PC-3 (cell line): ENCODE measurements at regions of chr7 and their contacts with region 1.

Region 1: GRCh38 chr7:73851410-73852234 is 9.3 kb upstream of the METTL27 start:
- DNase-seq: peak; percentile 98
- ATAC-seq: peak; percentile 72
- H3K4me3 ChIP-seq: peak overlapping the region; percentile 27; the same call in 1 of the 2 replicates
- H3K27ac ChIP-seq: peak overlapping the region; percentile 97
- H3K4me1 ChIP-seq: peaks cover 51% of the 10 kb centered on the region
- H3K27me3 ChIP-seq: no peaks in the 10 kb centered on the region
- CTCF ChIP-seq: no peak

Region 2: DNA sequence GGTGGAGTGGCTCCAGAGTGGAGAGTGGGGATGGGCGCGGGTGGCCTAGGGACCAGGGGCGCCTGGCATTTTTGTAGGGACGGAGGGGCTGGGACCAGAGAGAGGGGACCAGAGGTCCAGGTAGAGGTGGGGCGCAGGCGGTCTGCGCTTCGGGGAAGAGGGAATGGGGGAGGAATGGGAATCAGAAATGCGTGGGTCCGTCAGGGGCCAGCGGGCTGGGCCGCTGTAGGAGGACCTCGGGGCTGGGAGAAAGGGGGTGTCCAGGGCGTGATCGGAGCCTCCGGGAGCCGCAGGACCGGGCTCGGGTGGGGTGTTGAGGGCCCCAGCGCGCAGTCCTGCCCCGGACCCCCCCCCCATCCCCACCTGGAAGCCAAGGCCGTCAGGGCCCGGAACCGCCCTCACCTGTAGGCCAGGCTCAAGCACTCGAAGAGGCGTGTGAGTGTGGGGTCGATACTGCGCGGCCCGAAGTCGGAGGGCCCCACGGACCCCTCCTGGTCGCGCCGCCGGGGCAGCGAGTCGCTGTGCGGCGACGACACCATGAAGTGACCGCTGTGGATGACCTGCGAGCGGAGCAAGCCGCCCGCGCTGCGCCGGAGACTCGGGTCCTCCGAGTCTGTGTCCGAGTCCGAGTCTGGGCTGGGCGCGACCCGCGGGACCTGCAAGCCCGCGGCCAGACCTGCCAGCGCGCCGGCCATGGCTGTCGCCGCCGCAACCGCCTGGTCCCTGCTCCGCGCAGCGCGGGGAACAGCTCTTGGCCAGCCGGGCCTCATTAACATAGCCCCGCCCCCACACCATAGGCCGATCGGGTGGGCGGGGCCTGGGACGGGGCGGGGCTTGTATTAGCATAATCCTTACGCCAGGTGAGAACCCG is 227.6 kb before region 1 on chr7 and contains the start of gene MLXIPL:
- CTCF ChIA-PET with region 1: no interaction called
- POLR2A ChIA-PET with region 1: no interaction called
- intact Hi-C with region 1: loop called (anchors 10 kb)
- DNase-seq: peak; percentile 86
- ATAC-seq: peak; percentile 93
- H3K4me3 ChIP-seq: peak within 1 kb of the TSS; percentile 74
- H3K27ac ChIP-seq: no peak within 1 kb of the TSS
- H3K4me1 ChIP-seq: peaks cover 5% of the 10 kb centered on the region; the same call in 1 of the 2 replicates
- H3K27me3 ChIP-seq: peaks cover 13% of the 10 kb centered on the region
- CTCF ChIP-seq: no peak
- total RNA-seq, gene MLXIPL: 4.7 and 6.9 TPM in 2 replicates

Region 3: DNA sequence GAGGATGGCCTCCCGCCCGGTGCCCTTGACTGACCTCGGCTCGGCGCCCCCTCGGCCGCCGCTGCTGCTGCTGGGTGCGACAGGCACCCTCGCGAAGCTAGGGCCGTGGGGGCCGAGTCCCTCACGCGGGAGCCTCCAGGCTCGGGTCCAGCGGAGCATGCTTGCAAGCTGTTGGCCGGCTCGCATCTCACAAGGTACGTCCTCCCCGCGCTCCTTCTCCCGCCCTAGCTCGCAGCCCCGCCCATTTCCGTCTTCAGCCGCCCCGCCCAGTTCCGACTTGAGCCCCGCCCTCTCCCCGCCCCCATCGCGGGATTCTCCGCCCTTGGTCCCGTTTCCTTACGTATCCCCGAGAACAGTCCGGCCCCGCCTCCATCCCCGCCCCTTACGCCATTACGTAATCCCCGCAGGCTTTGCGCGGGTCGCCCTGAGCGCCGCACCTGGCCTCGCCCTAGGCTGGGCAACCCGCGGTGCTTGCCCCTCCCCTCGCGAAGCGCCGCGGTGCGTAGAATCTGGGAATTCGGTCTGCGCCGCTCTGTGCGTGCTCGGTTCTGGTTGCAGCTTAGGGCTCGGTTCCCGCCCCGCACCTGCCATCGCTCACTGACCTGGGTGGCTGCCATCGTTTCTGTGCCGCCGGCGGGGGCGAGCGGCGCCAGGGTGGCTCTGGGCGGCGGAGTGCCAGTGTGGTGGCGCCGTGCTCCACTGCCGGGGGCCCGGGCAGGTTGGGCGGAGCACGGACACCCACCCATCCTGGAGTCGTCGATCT is 112.8 kb before region 1 on chr7 and contains the start of gene ABHD11:
- CTCF ChIA-PET with region 1: no interaction called
- POLR2A ChIA-PET with region 1: interaction called, 5 read pairs
- intact Hi-C with region 1: loop called (anchors 1 kb)
- DNase-seq: peak; percentile 95
- ATAC-seq: peak; percentile 76
- H3K4me3 ChIP-seq: peak within 1 kb of the TSS; percentile 92
- H3K27ac ChIP-seq: peak within 1 kb of the TSS; percentile 73
- H3K4me1 ChIP-seq: peaks cover 36% of the 10 kb centered on the region
- H3K27me3 ChIP-seq: no peaks in the 10 kb centered on the region
- CTCF ChIP-seq: 0 out of 2 replicates have a peak, but pooled peaks have one; percentile 14
- total RNA-seq, gene ABHD11: 38.6 and 41.4 TPM in 2 replicates

Region 4: DNA sequence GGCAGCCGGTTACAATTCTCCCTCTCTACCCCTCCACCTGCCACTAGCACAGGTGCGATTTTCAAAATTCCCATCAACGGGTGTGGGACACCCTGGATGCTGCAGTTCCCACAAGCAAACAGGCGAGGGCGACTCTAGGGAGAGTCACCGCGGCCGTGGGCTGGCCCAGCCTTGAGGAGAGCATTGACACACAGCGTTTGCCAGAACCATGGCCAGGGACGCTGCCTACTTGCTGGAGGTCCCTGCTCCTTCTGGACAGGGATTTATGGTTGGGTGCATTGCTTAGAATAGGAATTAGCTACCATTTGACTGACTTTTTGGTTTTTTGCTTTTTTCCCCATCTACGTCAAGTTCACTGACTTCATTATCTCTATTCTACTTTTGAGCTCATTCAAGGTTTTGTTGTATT is 39.9 kb before region 1 on chr7:
- CTCF ChIA-PET with region 1: interaction called, 4 read pairs
- POLR2A ChIA-PET with region 1: no interaction called
- intact Hi-C with region 1: loop called (anchors 1 kb)
- DNase-seq: peak; percentile 84
- ATAC-seq: peak; percentile 84
- H3K4me3 ChIP-seq: no peak overlapping the region
- H3K27ac ChIP-seq: no peak overlapping the region
- H3K4me1 ChIP-seq: peaks cover 6% of the 10 kb centered on the region
- H3K27me3 ChIP-seq: no peaks in the 10 kb centered on the region
- CTCF ChIP-seq: peak; percentile 81

Region 5: DNA sequence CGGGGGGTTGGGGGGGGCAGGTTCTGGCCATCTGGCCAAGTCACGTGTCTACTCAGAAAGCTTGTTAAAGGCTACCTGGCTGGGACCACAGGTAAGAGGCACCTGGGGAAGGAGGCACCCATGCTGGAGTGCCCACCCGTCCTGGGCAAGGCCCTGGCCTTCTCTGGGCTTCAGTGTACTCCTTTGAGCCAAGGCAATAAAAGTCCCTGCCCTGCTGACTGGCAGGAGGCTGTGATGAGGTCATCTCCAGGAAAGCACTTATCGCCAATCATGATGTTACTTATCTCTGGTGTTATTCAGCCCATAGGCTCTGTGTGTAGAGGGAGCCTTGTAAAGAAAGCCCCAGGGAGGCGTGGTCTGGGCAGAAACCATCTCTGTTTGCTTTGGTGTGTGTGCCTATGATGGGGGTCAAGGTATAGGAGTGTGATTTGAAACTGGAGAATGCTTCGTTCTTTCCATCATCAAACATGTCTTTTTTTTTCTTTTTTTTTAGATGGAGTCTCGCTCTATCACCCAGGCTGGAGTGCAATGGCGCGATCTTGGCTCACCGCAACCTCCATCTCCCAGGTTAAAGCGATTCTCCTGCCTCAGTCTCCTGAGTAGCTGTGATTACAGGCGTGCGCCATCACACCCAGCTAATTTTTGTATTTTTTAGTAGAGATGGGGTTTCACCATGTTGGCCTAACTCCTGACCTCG is 23.4 kb before region 1 on chr7:
- CTCF ChIA-PET with region 1: interaction called, 18 read pairs
- POLR2A ChIA-PET with region 1: interaction called, 17 read pairs
- intact Hi-C with region 1: loop called (anchors 1 kb)
- DNase-seq: peak; percentile 92
- ATAC-seq: peak; percentile 44
- H3K4me3 ChIP-seq: 0 out of 2 replicates have a peak overlapping the region, but pooled peaks have one; percentile 99
- H3K27ac ChIP-seq: peak overlapping the region; percentile 96
- H3K4me1 ChIP-seq: peaks cover 59% of the 10 kb centered on the region
- H3K27me3 ChIP-seq: no peaks in the 10 kb centered on the region
- CTCF ChIP-seq: no peak

Region 6: GRCh38 chr7:73921623-73922528 is 70.3 kb after region 1 on chr7:
- CTCF ChIA-PET with region 1: no interaction called
- POLR2A ChIA-PET with region 1: no interaction called
- intact Hi-C with region 1: no loop called
- DNase-seq: no peak
- ATAC-seq: no peak
- H3K4me3 ChIP-seq: no peak overlapping the region
- H3K27ac ChIP-seq: no peak overlapping the region
- H3K4me1 ChIP-seq: no peaks in the 10 kb centered on the region
- H3K27me3 ChIP-seq: peaks cover 11% of the 10 kb centered on the region; the same call in 1 of the 2 replicates
- CTCF ChIP-seq: no peak

Region 7: DNA sequence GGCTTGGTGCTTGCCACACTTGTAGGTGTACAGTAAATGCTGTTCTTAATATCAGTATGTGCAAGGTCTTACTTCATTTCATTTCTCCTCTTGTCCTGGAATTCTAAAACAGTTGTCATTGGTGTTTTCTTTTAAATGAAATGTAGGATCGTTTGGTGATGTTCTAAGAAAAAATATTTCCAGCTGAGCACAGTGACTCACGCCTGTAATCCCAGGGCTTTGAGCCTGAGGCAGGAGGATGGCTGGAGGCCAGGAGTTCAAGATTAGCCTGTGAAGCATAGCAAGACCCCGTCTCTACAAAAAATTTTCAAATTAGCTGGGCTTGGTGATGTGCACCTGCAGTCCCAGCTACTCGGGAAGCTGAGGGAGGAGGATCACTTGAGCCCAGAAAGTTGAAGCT is 143.7 kb after region 1 on chr7:
- CTCF ChIA-PET with region 1: no interaction called
- POLR2A ChIA-PET with region 1: no interaction called
- intact Hi-C with region 1: no loop called
- DNase-seq: peak; percentile 13
- ATAC-seq: no peak
- H3K4me3 ChIP-seq: no peak overlapping the region
- H3K27ac ChIP-seq: no peak overlapping the region
- H3K4me1 ChIP-seq: no peaks in the 10 kb centered on the region
- H3K27me3 ChIP-seq: no peaks in the 10 kb centered on the region
- CTCF ChIP-seq: no peak

Region 8: DNA sequence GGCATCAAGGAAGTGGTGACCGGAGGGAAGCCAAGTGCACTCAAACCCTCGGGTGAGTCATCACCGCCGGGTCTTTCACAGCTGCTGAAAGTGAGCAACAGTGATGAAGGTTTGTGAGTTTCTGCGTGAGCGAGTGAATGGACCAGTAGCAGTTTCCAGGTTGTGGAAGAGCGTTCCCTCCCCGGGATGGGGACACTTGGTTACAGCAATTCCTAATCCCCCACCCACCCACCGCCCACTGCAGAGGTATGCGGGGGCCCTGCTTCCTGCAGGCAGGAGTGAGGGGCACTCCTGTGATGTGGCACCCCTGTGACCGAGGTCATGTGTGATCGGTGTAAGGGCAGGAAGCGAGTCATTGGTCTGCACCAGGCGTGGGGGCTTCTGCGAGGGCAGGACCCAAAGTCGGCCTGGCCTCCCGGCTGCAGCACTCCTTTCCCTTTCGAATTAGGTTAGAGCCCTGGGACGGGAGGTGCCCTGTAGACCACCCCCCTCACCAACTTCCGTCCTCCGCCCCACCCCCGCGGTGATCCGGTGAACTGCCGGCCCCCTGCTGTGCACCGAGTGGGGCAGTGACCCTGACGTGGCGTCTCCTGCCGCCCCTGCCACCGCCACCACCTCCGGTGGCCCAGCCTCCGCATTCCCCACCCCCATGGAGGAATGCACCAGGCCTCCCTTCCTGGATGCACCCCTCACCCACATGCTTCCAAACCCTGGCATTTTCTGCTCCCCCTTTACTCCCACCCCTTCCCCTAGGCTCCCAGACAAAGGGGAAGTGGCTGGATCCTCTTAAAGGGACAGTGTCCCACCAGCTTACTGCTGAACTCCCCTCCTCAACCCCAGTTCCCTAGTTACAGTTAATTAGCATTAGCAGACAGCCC is 242.8 kb after region 1 on chr7:
- CTCF ChIA-PET with region 1: no interaction called
- POLR2A ChIA-PET with region 1: no interaction called
- intact Hi-C with region 1: no loop called
- DNase-seq: peak; percentile 93
- ATAC-seq: peak; percentile 84
- H3K4me3 ChIP-seq: peak overlapping the region; percentile 23; the same call in 1 of the 2 replicates
- H3K27ac ChIP-seq: peak overlapping the region; percentile 73
- H3K4me1 ChIP-seq: peaks cover 41% of the 10 kb centered on the region
- H3K27me3 ChIP-seq: no peaks in the 10 kb centered on the region
- CTCF ChIP-seq: no peak